HepG2 (cell line): ENCODE measurements at regions of chr12 and their contacts with region 1.

Region 1: DNA sequence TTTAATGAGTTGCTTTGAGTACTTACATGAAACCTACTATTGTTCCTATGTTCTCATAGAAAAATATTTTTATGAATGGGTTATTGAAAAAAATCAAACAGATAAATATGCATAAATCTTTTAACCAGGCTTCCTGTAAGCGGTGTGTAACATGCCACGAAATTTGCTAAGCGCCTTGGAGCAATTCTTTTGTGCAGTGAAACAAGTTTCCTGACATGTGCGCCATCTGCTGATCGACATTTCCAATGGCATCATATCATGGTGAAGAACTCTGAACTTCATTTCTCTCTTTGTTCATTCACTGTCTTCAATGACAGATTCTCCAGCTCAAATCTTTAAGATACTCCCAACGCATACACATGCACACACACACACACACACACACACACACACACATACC is 145.6 kb upstream of the NAV3 start:
- DNase-seq: peak; percentile 56
- ATAC-seq: peak; percentile 74
- H3K4me3 ChIP-seq: no peak overlapping the region
- H3K27ac ChIP-seq: no peak overlapping the region
- H3K4me1 ChIP-seq: no peaks in the 10 kb centered on the region
- H3K27me3 ChIP-seq: no peaks in the 10 kb centered on the region
- CTCF ChIP-seq: peak; percentile 74
- EP300 ChIP-seq: no peak
- POLR2A ChIP-seq: no peak
- RAD21 ChIP-seq: no peak

Region 2: GRCh38 chr12:77152623-77153193 is 532.4 kb before region 1 on chr12:
- CTCF ChIA-PET with region 1: interaction called, 4 read pairs
- POLR2A ChIA-PET with region 1: no interaction called
- in situ Hi-C with region 1: loop called (anchors 10 kb)
- intact Hi-C with region 1: loop called (anchors 1 kb)
- DNase-seq: peak; percentile 5
- ATAC-seq: no peak
- H3K4me3 ChIP-seq: no peak overlapping the region
- H3K27ac ChIP-seq: no peak overlapping the region
- H3K4me1 ChIP-seq: no peaks in the 10 kb centered on the region
- H3K27me3 ChIP-seq: no peaks in the 10 kb centered on the region
- CTCF ChIP-seq: peak; percentile 52
- EP300 ChIP-seq: no peak
- POLR2A ChIP-seq: no peak
- RAD21 ChIP-seq: no peak